ENCODE measurements at regions of chr14 and their contacts with region 1.

Region 1: GRCh38 chr14:91114079-91115065 is 499 bp downstream of the DGLUCY start:
- DNase-seq: peak; percentile 25 to 75 (median 66)
- ATAC-seq: peak; percentile 84
- H3K4me3 ChIP-seq: peak overlapping the region; percentile 76
- H3K4me3 Mint-ChIP-seq: peak overlapping the region; percentile 84 to 99 (median 93)
- H3K27ac ChIP-seq: peak overlapping the region; percentile 87
- H3K27ac Mint-ChIP-seq: peak overlapping the region; percentile 88 to 97 (median 96)
- H3K4me1 ChIP-seq: peaks cover 54 to 55% of the 10 kb centered on the region in 2 donors
- H3K4me1 Mint-ChIP-seq: peaks cover 46 to 82% (median 73%) of the 10 kb centered on the region in 7 donors
- H3K27me3 ChIP-seq: no peaks in the 10 kb centered on the region
- H3K27me3 Mint-ChIP-seq: no peaks in the 10 kb centered on the region

Region 2: GRCh38 chr14:89406941-89407340 is 1707.4 kb before region 1 on chr14:
- CTCF ChIA-PET with region 1: no interaction called
- POLR2A ChIA-PET with region 1: no interaction called
- intact Hi-C with region 1: no loop called
- DNase-seq: no peak
- ATAC-seq: peak; percentile 12
- H3K4me3 ChIP-seq: no peak overlapping the region
- H3K4me3 Mint-ChIP-seq: peak overlapping the region in 9 of 10 donors; percentile 10 to 78 (median 47)
- H3K27ac ChIP-seq: no peak overlapping the region
- H3K27ac Mint-ChIP-seq: peak overlapping the region; percentile 5 to 86 (median 56)
- H3K4me1 ChIP-seq: peaks cover 14 to 41% of the 10 kb centered on the region in 2 donors
- H3K4me1 Mint-ChIP-seq: peaks cover 50 to 92% (median 86%) of the 10 kb centered on the region in 7 donors
- H3K27me3 ChIP-seq: no peaks in the 10 kb centered on the region
- H3K27me3 Mint-ChIP-seq: no peaks in the 10 kb centered on the region

Region 3: GRCh38 chr14:90060312-90060964 is 1053.9 kb before region 1 on chr14:
- CTCF ChIA-PET with region 1: no interaction called
- POLR2A ChIA-PET with region 1: no interaction called
- intact Hi-C with region 1: no loop called
- DNase-seq: peak in 8 of 9 donors; percentile 9 to 73 (median 24)
- ATAC-seq: peak; percentile 70
- H3K4me3 ChIP-seq: peak overlapping the region; percentile 41
- H3K4me3 Mint-ChIP-seq: peak overlapping the region; percentile 46 to 88 (median 78)
- H3K27ac ChIP-seq: no peak overlapping the region
- H3K27ac Mint-ChIP-seq: no peak overlapping the region
- H3K4me1 ChIP-seq: peaks cover 0 to 12% of the 10 kb centered on the region in 2 donors
- H3K4me1 Mint-ChIP-seq: peaks cover 16 to 30% (median 23%) of the 10 kb centered on the region in 7 donors
- H3K27me3 ChIP-seq: peaks cover 0 to 11% of the 10 kb centered on the region in 2 donors
- H3K27me3 Mint-ChIP-seq: peaks cover 63 to 76% (median 72%) of the 10 kb centered on the region in 5 donors

Region 4: GRCh38 chr14:90903101-90903500 is 211.3 kb before region 1 on chr14:
- CTCF ChIA-PET with region 1: interaction called, 5 read pairs
- POLR2A ChIA-PET with region 1: interaction called, 3 read pairs
- intact Hi-C with region 1: loop called in 1 of 2 experiments (anchors 1 kb)
- DNase-seq: peak; percentile 11 to 71 (median 57)
- ATAC-seq: peak; percentile 89
- H3K4me3 ChIP-seq: no peak overlapping the region
- H3K4me3 Mint-ChIP-seq: no peak overlapping the region
- H3K27ac ChIP-seq: no peak overlapping the region
- H3K27ac Mint-ChIP-seq: peak overlapping the region in 2 of 9 donors; percentile 36 to 48
- H3K4me1 ChIP-seq: no peaks in the 10 kb centered on the region
- H3K4me1 Mint-ChIP-seq: peaks cover 0 to 30% (median 0%) of the 10 kb centered on the region in 7 donors
- H3K27me3 ChIP-seq: no peaks in the 10 kb centered on the region
- H3K27me3 Mint-ChIP-seq: no peaks in the 10 kb centered on the region

Region 5: DNA sequence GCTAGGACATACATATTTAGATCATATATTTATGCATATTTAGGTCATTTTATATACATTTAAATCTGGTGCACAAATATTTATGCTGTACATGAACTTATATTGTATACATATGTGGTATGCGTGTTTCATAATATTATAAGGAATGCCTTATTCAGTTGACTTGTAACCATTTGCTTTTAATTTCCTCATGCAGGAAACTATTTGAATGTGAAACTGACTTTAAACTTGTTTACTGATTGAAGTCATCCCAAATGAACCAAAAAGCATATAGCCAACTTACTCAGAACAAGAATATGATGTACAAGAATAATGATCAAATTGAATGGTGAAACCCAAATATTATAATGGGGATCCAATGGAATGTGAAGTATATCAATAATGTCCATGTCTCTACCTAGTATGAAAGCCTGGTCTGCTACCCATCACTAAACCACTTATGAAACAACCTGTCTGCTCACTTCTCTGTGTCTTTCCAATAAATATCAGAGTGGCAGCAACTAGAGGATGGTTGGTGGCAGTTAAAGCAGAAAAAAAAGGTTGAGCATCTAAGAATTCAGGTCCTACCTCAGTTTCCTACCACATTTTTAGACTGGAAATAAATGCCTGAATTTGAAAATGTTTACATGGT is 92.3 kb before region 1 on chr14:
- CTCF ChIA-PET with region 1: no interaction called
- POLR2A ChIA-PET with region 1: no interaction called
- intact Hi-C with region 1: loop called in 1 of 2 experiments (anchors 1 kb)
- DNase-seq: peak in 2 of 9 donors; percentile 13 to 49
- ATAC-seq: peak; percentile 48
- H3K4me3 ChIP-seq: peak overlapping the region; percentile 56
- H3K4me3 Mint-ChIP-seq: peak overlapping the region; percentile 73 to 92 (median 84)
- H3K27ac ChIP-seq: peak overlapping the region; percentile 73
- H3K27ac Mint-ChIP-seq: peak overlapping the region; percentile 88 to 99 (median 92)
- H3K4me1 ChIP-seq: peaks cover 7 to 12% of the 10 kb centered on the region in 2 donors
- H3K4me1 Mint-ChIP-seq: peaks cover 21 to 79% (median 74%) of the 10 kb centered on the region in 7 donors
- H3K27me3 ChIP-seq: no peaks in the 10 kb centered on the region
- H3K27me3 Mint-ChIP-seq: no peaks in the 10 kb centered on the region

Region 6: GRCh38 chr14:91068642-91069041 is 45.7 kb before region 1 on chr14:
- CTCF ChIA-PET with region 1: interaction called, 3 read pairs
- POLR2A ChIA-PET with region 1: interaction called, 25 read pairs
- intact Hi-C with region 1: no loop called
- DNase-seq: peak in 4 of 9 donors; percentile 19 to 31 (median 27)
- ATAC-seq: no peak
- H3K4me3 ChIP-seq: no peak overlapping the region
- H3K4me3 Mint-ChIP-seq: peak overlapping the region; percentile 54 to 89 (median 63)
- H3K27ac ChIP-seq: peak overlapping the region; percentile 6
- H3K27ac Mint-ChIP-seq: peak overlapping the region; percentile 66 to 94 (median 87)
- H3K4me1 ChIP-seq: peaks cover 58 to 60% of the 10 kb centered on the region in 2 donors
- H3K4me1 Mint-ChIP-seq: peaks cover 53 to 70% (median 61%) of the 10 kb centered on the region in 7 donors
- H3K27me3 ChIP-seq: no peaks in the 10 kb centered on the region
- H3K27me3 Mint-ChIP-seq: peaks cover 0 to 2% (median 0%) of the 10 kb centered on the region in 5 donors

Region 7: GRCh38 chr14:91078095-91078737 is 36.2 kb before region 1 on chr14:
- CTCF ChIA-PET with region 1: interaction called, 5 read pairs
- POLR2A ChIA-PET with region 1: interaction called, 15 read pairs
- intact Hi-C with region 1: loop called (anchors 1 kb)
- DNase-seq: peak in 8 of 9 donors; percentile 52 to 88 (median 82)
- ATAC-seq: peak; percentile 98
- H3K4me3 ChIP-seq: no peak overlapping the region
- H3K4me3 Mint-ChIP-seq: peak overlapping the region; percentile 56 to 85 (median 72)
- H3K27ac ChIP-seq: no peak overlapping the region
- H3K27ac Mint-ChIP-seq: peak overlapping the region; percentile 32 to 92 (median 82)
- H3K4me1 ChIP-seq: peaks cover 10 to 17% of the 10 kb centered on the region in 2 donors
- H3K4me1 Mint-ChIP-seq: peaks cover 24 to 63% (median 37%) of the 10 kb centered on the region in 7 donors
- H3K27me3 ChIP-seq: no peaks in the 10 kb centered on the region
- H3K27me3 Mint-ChIP-seq: peaks cover 0 to 2% (median 0%) of the 10 kb centered on the region in 5 donors

Region 8: GRCh38 chr14:91138511-91139359 is 24.4 kb after region 1 on chr14:
- CTCF ChIA-PET with region 1: no interaction called
- POLR2A ChIA-PET with region 1: interaction called, 4 read pairs
- intact Hi-C with region 1: loop called (anchors 1 to 2 kb)
- DNase-seq: peak in 8 of 9 donors; percentile 11 to 56 (median 45)
- ATAC-seq: peak; percentile 75
- H3K4me3 ChIP-seq: no peak overlapping the region
- H3K4me3 Mint-ChIP-seq: no peak overlapping the region
- H3K27ac ChIP-seq: no peak overlapping the region
- H3K27ac Mint-ChIP-seq: peak overlapping the region in 4 of 9 donors; percentile 31 to 67 (median 52)
- H3K4me1 ChIP-seq: peaks cover 5 to 12% of the 10 kb centered on the region in 2 donors
- H3K4me1 Mint-ChIP-seq: peaks cover 16 to 59% (median 33%) of the 10 kb centered on the region in 7 donors
- H3K27me3 ChIP-seq: no peaks in the 10 kb centered on the region
- H3K27me3 Mint-ChIP-seq: no peaks in the 10 kb centered on the region

Region 9: GRCh38 chr14:91249841-91250616 is 135.7 kb after region 1 on chr14:
- CTCF ChIA-PET with region 1: no interaction called
- POLR2A ChIA-PET with region 1: no interaction called
- intact Hi-C with region 1: loop called in 1 of 2 experiments (anchors 5 kb)
- DNase-seq: peak in 4 of 9 donors; percentile 20 to 52 (median 40)
- ATAC-seq: peak; percentile 8
- H3K4me3 ChIP-seq: peak overlapping the region; percentile 36
- H3K4me3 Mint-ChIP-seq: peak overlapping the region; percentile 27 to 84 (median 57)
- H3K27ac ChIP-seq: peak overlapping the region; percentile 55
- H3K27ac Mint-ChIP-seq: peak overlapping the region; percentile 53 to 98 (median 91)
- H3K4me1 ChIP-seq: peaks cover 63 to 81% of the 10 kb centered on the region in 2 donors
- H3K4me1 Mint-ChIP-seq: peaks cover 54 to 87% (median 80%) of the 10 kb centered on the region in 7 donors
- H3K27me3 ChIP-seq: no peaks in the 10 kb centered on the region
- H3K27me3 Mint-ChIP-seq: no peaks in the 10 kb centered on the region

Measured in naive thymus-derived CD4-positive, alpha-beta T cell (primary cell).